Activated B cell treated with CpG ODN at 0.5 μM for 24 hours (primary cell): ENCODE measurements at regions of chr13 and their contacts with region 1.

Region 1: DNA sequence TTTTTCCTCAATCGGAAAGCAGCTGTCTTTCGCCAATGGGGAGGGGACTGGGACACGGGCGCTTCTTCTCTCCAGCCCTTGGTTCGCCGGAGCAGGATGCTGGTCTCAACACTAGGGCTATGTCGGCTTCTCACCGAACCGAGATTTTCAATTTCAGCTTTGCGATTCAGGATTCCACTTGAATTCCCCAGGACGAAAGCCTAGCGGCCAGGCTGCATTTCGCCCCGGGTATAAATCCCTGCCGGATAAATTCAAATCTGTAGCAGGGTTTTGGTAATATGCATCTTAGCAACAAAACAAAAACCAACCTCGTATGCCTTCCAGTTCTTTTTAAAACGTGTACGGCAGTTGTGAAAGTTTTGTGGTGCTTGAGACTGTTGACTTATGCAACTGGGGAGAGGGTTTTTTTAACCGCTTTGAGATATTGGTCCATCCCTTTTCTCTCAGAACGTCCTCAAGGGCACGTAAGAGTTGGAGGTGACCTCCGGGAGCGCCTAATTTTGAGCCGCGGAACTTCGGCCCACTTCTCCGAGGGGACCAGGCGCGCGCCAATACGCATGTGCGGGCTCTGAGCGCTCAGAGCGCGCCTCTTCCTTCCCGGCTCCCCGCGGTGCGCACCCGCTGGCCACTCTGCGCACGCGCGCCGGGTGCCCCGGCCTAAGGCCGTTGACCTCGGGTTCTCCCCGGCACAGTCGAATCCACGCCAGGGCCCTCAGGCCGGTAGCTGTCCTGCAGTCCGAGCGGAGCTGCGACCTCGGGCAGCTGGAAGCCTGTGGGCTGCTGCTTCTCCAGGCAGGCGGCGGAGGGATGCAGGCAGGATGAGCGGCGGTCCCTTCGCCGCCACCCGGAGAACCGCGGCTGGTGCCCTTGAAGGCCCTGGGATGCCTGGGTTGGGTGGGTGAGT is 7.6 kb downstream of the POU4F1 start:
- DNase-seq: no peak
- ATAC-seq: no peak
- H3K4me3 Mint-ChIP-seq: no peak overlapping the region
- H3K27ac Mint-ChIP-seq: no peak overlapping the region
- H3K4me1 Mint-ChIP-seq: peaks cover 12% of the 10 kb centered on the region
- H3K27me3 Mint-ChIP-seq: peaks cover 66% of the 10 kb centered on the region
- CTCF ChIP-seq: no peak

Region 2: DNA sequence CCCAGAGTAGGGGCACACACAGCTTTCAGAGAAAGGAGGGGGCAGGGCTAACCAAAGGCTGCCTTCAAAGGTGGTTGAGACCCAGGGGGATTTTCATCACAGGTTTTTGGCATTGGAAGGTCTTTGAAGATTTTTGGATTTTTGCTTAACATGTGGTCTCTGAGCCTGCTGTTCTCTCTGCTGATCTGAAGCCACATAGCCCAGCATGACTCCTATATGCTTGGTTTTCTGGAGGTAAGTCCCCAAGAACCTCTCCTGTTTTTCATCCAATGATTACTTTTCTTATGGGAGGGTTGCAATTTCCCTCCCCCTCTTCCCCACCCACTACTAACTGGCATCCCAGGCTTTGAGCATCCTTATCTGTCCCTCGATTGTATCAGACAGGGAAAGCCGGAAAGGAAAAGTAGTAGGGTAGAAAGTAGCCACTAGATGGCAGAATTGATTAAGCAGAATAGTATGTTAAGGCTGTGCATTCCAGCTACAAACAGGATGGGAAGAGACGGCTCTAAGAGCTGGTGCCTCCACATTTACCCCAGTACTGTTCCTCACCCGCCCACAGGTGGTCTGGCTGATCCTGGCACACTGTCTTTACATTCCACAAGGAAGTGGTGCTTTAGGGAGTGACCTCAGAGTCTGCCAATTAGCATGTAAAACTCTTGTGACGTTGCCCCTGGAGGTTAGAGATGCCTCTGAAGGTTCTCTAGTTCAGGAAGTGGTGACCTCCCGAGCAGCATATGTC is 458.2 kb before region 1 on chr13:
- CTCF ChIA-PET with region 1: no interaction called
- POLR2A ChIA-PET with region 1: no interaction called
- intact Hi-C with region 1: loop called (anchors 5 kb)
- DNase-seq: peak; percentile 18
- ATAC-seq: peak; percentile 71
- H3K4me3 Mint-ChIP-seq: peak overlapping the region; percentile 79
- H3K27ac Mint-ChIP-seq: no peak overlapping the region
- H3K4me1 Mint-ChIP-seq: peaks cover 5% of the 10 kb centered on the region
- H3K27me3 Mint-ChIP-seq: peaks cover 5% of the 10 kb centered on the region
- CTCF ChIP-seq: no peak

Region 3: DNA sequence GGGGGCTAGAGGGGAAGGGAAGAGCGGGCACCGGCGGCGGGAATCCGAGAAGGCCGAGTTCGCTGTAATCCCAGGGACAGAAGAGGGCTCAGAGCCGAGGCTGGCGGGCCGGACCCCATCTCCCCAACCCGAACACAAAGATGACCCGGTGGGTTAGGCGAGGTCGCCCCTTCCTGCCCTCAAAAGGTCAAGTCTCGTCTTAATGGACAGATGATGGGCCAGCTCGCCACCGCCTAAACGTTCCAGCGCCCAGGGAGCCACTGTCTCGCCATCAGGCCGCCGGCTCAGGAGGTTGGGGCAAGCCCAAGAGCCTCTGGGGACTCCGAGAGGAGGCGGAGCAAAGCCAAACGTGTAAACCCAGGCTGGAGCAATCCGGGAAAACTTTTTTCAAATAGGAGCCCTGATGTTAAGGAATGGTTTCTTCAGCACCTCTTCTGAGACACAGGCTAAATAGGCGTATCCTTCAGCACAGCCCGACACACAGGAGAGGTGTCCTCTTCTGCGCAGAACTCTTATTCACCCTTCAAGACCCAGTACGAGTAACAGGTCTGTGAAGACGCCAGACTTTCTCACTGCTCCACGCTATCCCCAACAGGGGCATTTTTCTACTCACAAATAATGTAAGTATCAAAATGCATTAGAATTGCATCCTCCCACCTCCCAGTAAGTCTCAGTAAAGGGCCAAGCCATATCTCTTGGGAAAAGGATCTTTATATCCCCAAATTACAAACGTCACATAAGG is 13.9 kb after region 1 on chr13:
- CTCF ChIA-PET with region 1: interaction called, 3 read pairs
- POLR2A ChIA-PET with region 1: no interaction called
- intact Hi-C with region 1: loop called (anchors 1 kb)
- DNase-seq: no peak
- ATAC-seq: peak; percentile 21
- H3K4me3 Mint-ChIP-seq: peak overlapping the region; percentile 84
- H3K27ac Mint-ChIP-seq: no peak overlapping the region
- H3K4me1 Mint-ChIP-seq: peaks cover 46% of the 10 kb centered on the region
- H3K27me3 Mint-ChIP-seq: peaks cover 55% of the 10 kb centered on the region
- CTCF ChIP-seq: no peak